ENCODE measurements at regions of chr3 and their contacts with region 1.

Region 1: GRCh38 chr3:73502609-73503583 is 121.8 kb downstream of the PDZRN3 start:
- DNase-seq: peak; percentile 77 to 83
- H3K4me3 ChIP-seq: no peak overlapping the region
- H3K27ac ChIP-seq: peak overlapping the region in 1 of 2 donors; percentile 34
- H3K4me1 ChIP-seq: peaks cover 3 to 13% of the 10 kb centered on the region in 2 donors
- H3K27me3 ChIP-seq: no peaks in the 10 kb centered on the region
- CTCF ChIP-seq: peak; percentile 73 to 92 (median 82)
- POLR2A ChIP-seq: no peak

Region 2: DNA sequence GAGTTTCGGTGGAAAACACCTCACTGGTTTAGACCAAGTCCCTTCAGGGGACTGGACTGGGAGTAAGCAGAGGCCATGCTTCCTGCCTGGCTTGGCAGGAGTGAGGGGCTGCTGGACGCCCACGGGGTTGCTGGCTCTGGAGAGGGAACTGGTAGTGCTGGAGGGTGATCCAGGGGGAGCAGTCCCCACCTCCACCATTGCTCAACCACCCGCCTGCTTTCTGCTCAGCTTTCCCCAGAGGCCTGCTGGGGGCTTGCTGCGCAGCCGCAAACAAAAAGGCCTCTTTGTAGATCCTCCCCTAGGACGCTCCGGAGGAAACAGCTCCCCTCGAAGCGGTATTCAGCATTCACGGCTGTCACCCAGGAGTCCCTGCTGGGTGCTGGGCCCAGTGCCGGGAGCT is 407.9 kb before region 1 on chr3:
- intact Hi-C with region 1: loop called (anchors 5 kb)
- DNase-seq: no peak
- H3K4me3 ChIP-seq: no peak overlapping the region
- H3K27ac ChIP-seq: no peak overlapping the region
- H3K4me1 ChIP-seq: no peaks in the 10 kb centered on the region
- H3K27me3 ChIP-seq: no peaks in the 10 kb centered on the region
- CTCF ChIP-seq: no peak
- POLR2A ChIP-seq: no peak